IMR-90 (cell line): ENCODE measurements at regions of chr9 and their contacts with region 1.

Region 1: GRCh38 chr9:85610074-85610860 is 131.5 kb downstream of the AGTPBP1 start:
- DNase-seq: peak; percentile 82
- ATAC-seq: peak; percentile 87
- H3K4me3 ChIP-seq: peak overlapping the region; percentile 39; the same call in 1 of the 2 replicates
- H3K27ac ChIP-seq: no peak overlapping the region
- H3K4me1 ChIP-seq: no peaks in the 10 kb centered on the region
- H3K27me3 ChIP-seq: no peaks in the 10 kb centered on the region
- CTCF ChIP-seq: peak; percentile 93
- POLR2A ChIP-seq: no peak
- RAD21 ChIP-seq: peak; percentile 87

Region 2: DNA sequence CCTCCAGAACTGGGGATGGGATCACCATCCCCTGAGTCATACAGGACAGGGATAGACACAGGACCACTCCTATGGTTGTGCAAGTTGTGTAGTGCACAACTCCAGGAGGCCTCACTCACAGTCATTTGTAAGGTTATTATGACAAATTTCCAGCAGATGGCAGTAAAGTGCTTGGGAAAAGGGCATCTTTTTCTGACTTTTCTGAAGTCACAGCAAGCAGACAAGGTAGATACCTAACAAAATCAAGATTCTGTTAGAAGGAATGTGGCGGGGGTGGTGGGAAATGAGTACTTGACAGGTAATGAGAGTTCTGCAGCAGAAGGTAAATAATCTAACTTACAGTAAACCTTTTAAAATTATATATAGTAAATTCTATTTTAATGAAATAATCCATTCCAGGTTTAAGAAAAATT is 1672.3 kb before region 1 on chr9:
- CTCF ChIA-PET with region 1: no interaction called
- POLR2A ChIA-PET with region 1: no interaction called
- dilution Hi-C with region 1: no loop called
- in situ Hi-C with region 1: no loop called
- intact Hi-C with region 1: loop called (anchors 10 kb)
- DNase-seq: peak; percentile 62
- ATAC-seq: peak; percentile 71
- H3K4me3 ChIP-seq: no peak overlapping the region
- H3K27ac ChIP-seq: no peak overlapping the region
- H3K4me1 ChIP-seq: peaks cover 5% of the 10 kb centered on the region
- H3K27me3 ChIP-seq: no peaks in the 10 kb centered on the region
- CTCF ChIP-seq: peak; percentile 68
- POLR2A ChIP-seq: no peak
- RAD21 ChIP-seq: peak; percentile 88

Region 3: GRCh38 chr9:84668196-84669012 is 941.9 kb before region 1 on chr9:
- CTCF ChIA-PET with region 1: interaction called, 3 read pairs
- POLR2A ChIA-PET with region 1: no interaction called
- dilution Hi-C with region 1: no loop called
- in situ Hi-C with region 1: no loop called
- intact Hi-C with region 1: loop called (anchors 1 kb)
- DNase-seq: peak; percentile 19
- ATAC-seq: peak; percentile 87
- H3K4me3 ChIP-seq: peak overlapping the region; percentile 29
- H3K27ac ChIP-seq: no peak overlapping the region
- H3K4me1 ChIP-seq: no peaks in the 10 kb centered on the region
- H3K27me3 ChIP-seq: peaks cover 15% of the 10 kb centered on the region
- CTCF ChIP-seq: peak; percentile 46
- POLR2A ChIP-seq: no peak
- RAD21 ChIP-seq: peak; percentile 49

Region 4: DNA sequence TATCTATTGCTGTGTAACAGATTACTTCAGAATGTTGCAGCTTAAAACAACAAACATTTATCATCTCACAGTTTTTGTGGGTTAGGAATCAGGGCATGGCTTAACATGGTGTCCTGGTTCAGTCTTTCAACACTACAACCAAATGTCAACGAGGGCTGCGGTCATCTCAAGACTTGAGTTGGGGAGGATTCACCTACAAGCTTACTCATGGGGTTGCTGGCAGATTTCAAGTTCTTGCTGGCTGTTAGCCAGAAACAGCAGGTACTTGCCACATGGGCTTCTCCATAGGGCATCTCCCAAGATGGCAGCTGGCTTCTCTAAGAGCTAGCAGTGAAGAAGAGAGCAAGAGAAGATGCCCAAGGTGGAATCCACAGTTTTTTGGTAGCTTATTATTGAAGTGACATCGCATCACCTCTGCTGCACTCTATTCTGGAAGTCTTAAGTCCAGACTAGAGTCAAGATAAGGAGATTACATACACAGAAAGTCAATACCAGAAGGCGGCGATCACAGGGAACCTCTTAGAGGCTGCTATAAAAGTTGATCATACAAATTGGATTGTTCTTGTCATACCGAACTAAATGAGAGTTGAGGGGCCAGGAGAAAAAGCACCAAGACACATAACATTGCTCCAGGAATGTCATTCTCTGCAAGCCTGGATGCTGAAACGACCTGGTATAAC is 606.9 kb after region 1 on chr9:
- CTCF ChIA-PET with region 1: no interaction called
- POLR2A ChIA-PET with region 1: no interaction called
- dilution Hi-C with region 1: no loop called
- in situ Hi-C with region 1: no loop called
- intact Hi-C with region 1: no loop called
- DNase-seq: no peak
- ATAC-seq: no peak
- H3K4me3 ChIP-seq: no peak overlapping the region
- H3K27ac ChIP-seq: no peak overlapping the region
- H3K4me1 ChIP-seq: no peaks in the 10 kb centered on the region
- H3K27me3 ChIP-seq: no peaks in the 10 kb centered on the region
- CTCF ChIP-seq: no peak
- POLR2A ChIP-seq: no peak
- RAD21 ChIP-seq: no peak